ENCODE measurements at regions of chr6 and their contacts with region 1.

Region 1: GRCh38 chr6:165884813-165885765 is 222.0 kb upstream of the PDE10A start:
- DNase-seq: peak; percentile 72 to 87 (median 82)
- H3K4me3 ChIP-seq: no peak overlapping the region
- H3K27ac ChIP-seq: peak overlapping the region in 1 of 59 donors; percentile 17
- H3K27me3 ChIP-seq: peaks cover 0 to 5% (median 0%) of the 10 kb centered on the region in 45 donors
- CTCF ChIP-seq: peak; percentile 63 to 98 (median 93)

Region 2: GRCh38 chr6:165939601-165940290 is 54.7 kb after region 1 on chr6:
- intact Hi-C with region 1: no loop called
- DNase-seq: no peak
- H3K4me3 ChIP-seq: no peak overlapping the region
- H3K27ac ChIP-seq: no peak overlapping the region
- H3K27me3 ChIP-seq: peaks cover 0 to 8% (median 0%) of the 10 kb centered on the region in 45 donors
- CTCF ChIP-seq: no peak

Region 3: DNA sequence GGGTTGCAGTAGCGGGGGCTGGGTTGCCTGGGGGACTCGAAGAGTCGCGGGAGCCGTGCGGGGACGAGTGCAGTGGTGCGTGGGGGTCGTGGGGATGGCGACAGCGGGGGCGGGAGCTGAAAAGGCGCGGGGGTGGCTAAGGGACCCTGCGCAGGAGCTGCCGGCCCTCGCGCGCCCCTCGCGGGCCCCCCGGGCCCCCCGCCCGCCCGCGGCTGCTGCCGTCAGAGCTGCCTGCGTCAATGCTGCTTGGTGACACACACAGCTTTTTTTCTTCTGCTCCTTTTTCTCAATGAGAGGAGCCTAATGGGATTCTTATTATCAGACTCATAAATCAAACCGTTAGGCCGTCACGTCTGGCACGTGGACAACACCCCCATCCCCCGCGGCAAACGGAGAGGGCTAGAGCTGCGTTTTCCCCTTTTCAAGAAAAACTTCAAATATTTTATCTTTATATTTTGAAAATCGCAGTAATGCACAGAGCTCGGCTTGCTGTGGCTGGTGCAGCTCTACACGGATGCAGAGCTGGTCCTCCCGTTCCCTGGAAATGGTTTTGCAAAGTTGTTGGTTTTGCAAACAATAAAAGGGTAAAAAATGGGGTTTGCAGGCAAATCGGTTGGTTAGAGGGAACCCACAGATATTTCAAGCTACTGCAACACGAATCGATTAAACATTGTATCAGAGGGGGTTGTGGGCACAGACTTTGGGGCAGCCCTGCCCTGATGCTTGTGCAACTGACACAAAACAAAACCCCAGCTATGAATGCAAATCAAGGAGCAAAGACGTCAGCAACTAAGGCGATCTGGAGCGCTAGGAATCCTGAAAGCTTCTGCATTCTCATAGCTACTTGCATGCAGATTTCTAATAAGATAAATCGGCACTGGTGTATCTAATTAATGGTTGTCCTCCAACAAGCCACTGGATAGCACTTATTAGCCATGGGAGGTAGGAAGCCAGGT is 121.1 kb after region 1 on chr6:
- intact Hi-C with region 1: loop called (anchors 5 kb)
- DNase-seq: peak in 8 of 10 donors; percentile 52 to 80 (median 74)
- H3K4me3 ChIP-seq: peak overlapping the region; percentile 26 to 75 (median 55)
- H3K27ac ChIP-seq: peak overlapping the region in 50 of 59 donors; percentile 8 to 91 (median 72)
- H3K27me3 ChIP-seq: peaks cover 0 to 46% (median 13%) of the 10 kb centered on the region in 45 donors
- CTCF ChIP-seq: no peak

Region 4: DNA sequence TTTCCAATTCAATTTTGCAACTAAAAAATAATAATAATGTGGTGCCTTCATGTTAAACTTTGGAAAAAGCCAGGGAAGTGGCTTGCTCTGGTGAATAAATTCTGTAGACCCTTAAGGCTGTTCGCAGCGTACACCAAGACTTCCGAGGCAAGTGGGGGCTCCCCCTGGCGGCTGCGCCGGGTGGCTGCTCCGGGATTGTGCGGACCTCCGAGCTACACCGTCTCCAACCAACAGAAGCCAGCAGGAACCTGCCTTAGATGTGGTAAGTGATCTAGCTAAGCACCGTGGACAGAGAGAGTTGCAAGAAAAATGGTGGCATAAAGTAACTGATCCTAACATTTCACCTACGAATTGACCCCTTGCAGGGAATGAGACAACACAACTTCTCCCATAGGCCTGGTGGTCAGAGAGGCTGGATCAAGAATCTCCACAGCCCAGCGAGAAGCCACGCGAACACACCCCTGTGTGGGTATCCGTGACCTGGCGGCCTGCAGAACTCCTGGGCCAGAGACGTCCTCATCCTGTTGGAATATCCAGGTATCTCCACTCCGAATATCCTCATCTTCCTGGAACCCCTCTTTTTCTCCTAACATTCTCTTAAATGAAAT is 212.9 kb after region 1 on chr6:
- intact Hi-C with region 1: loop called (anchors 2 kb)
- DNase-seq: peak in 9 of 10 donors; percentile 54 to 83 (median 78)
- H3K4me3 ChIP-seq: peak overlapping the region in 47 of 59 donors; percentile 10 to 63 (median 39)
- H3K27ac ChIP-seq: peak overlapping the region in 9 of 59 donors; percentile 6 to 66 (median 42)
- H3K27me3 ChIP-seq: peaks cover 0 to 14% (median 0%) of the 10 kb centered on the region in 45 donors
- CTCF ChIP-seq: peak; percentile 57 to 90 (median 81)

Region 5: DNA sequence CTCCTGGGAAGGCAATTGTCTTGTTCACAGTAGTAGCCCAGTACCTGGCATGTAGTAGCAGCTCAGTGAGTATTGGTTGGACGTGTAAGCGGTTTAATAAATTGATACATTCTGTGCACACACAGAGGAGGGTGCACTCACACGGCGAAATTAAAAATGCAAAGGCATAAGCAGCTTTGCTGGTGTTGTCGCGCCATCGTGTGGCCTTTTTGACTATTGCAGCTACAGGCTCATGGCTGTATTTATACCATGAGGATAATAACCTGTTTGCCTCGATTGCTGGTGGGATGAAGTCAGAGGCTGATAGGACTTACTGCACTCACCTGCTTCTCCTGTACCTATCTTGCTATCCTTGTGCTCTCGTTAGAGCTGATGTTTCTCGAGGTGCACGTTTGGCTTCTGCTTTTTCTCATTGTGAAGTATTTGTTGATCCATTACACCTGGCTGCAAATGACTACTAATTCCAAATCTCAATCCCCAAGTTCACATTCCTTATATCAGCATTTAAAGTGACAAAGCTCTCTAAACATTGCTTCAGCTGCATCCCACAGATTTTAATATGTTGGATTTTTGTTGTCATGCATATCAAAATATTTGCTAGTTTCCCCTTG is 221.1 kb after region 1 on chr6:
- intact Hi-C with region 1: loop called in 1 of 2 experiments (anchors 2 kb)
- DNase-seq: peak; percentile 70 to 92 (median 80)
- H3K4me3 ChIP-seq: no peak overlapping the region
- H3K27ac ChIP-seq: no peak overlapping the region
- H3K27me3 ChIP-seq: peaks cover 0 to 5% (median 0%) of the 10 kb centered on the region in 45 donors
- CTCF ChIP-seq: peak; percentile 77 to 98 (median 94)

Measured in dorsolateral prefrontal cortex (tissue), 120 donors.